H1 (cell line): ENCODE measurements at regions of chr7 and their contacts with region 1.

Region 1: DNA sequence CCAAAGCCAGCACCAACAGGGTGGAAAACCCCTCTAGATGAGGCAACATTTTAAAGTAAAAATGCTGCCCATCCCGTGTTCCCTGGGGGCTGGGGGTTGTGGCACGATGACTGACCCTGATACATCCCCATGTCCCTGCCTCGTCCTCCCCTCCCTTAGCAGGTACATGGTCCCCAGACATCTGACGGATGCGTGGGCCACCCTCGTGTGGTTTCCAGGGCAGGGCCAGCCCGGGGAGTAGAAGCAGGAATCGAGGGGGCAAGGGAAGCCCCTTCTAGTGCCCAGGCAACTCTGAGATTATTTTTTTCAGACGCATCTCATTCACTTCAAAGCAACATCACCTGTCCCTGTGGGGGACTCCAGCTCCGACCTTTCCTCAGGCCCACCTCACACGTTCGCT is 3.5 kb downstream of the TMEM130 start:
- DNase-seq: no peak
- H3K4me3 ChIP-seq: no peak overlapping the region
- H3K27ac ChIP-seq: no peak overlapping the region
- H3K4me1 ChIP-seq: peaks cover 0 to 14% (median 7%) of the 10 kb centered on the region in 4 experiments; a peak in 5 of 7 replicates
- H3K27me3 ChIP-seq: peaks cover 8 to 30% (median 22%) of the 10 kb centered on the region in 4 experiments
- CTCF ChIP-seq: no peak
- EP300 ChIP-seq: no peak
- POLR2A ChIP-seq: no peak
- RAD21 ChIP-seq: no peak

Region 2: GRCh38 chr7:98771519-98771918 is 94.8 kb before region 1 on chr7:
- CTCF ChIA-PET with region 1: no interaction called
- POLR2A ChIA-PET with region 1: no interaction called
- DNase-seq: no peak
- H3K4me3 ChIP-seq: peak overlapping the region in 3 of 4 experiments; percentile 26 to 45 (median 40); a peak in 6 of 8 replicates
- H3K27ac ChIP-seq: no peak overlapping the region
- H3K4me1 ChIP-seq: peaks cover 4 to 16% (median 8%) of the 10 kb centered on the region in 4 experiments
- H3K27me3 ChIP-seq: peaks cover 0 to 7% (median under 1%) of the 10 kb centered on the region in 4 experiments; a peak in 3 of 7 replicates
- CTCF ChIP-seq: no peak
- EP300 ChIP-seq: no peak
- POLR2A ChIP-seq: no peak
- RAD21 ChIP-seq: no peak

Region 3: GRCh38 chr7:98878365-98879165 is 12.2 kb after region 1 on chr7 and contains the start of gene TRRAP:
- CTCF ChIA-PET with region 1: interaction called, 6 read pairs
- POLR2A ChIA-PET with region 1: interaction called, 12 read pairs
- DNase-seq: peak in 1 of 2 experiments; percentile 90
- H3K4me3 ChIP-seq: peak within 1 kb of the TSS; percentile 74 to 99 (median 80)
- H3K27ac ChIP-seq: peak within 1 kb of the TSS; percentile 95
- H3K4me1 ChIP-seq: peaks cover 0 to 13% (median 5%) of the 10 kb centered on the region in 4 experiments; a peak in 5 of 7 replicates
- H3K27me3 ChIP-seq: no peaks in the 10 kb centered on the region
- CTCF ChIP-seq: peak; percentile 74 to 88 (median 85)
- EP300 ChIP-seq: no peak
- POLR2A ChIP-seq: peak; percentile 56 to 87
- RAD21 ChIP-seq: peak; percentile 6 to 16; a peak in 2 of 4 replicates
- total RNA-seq, gene TRRAP: 48.6 and 53.3 TPM in 2 replicates